Mucosa of descending colon (tissue), 3 donors: ENCODE measurements at regions of chr9 and their contacts with region 1.

Region 1: DNA sequence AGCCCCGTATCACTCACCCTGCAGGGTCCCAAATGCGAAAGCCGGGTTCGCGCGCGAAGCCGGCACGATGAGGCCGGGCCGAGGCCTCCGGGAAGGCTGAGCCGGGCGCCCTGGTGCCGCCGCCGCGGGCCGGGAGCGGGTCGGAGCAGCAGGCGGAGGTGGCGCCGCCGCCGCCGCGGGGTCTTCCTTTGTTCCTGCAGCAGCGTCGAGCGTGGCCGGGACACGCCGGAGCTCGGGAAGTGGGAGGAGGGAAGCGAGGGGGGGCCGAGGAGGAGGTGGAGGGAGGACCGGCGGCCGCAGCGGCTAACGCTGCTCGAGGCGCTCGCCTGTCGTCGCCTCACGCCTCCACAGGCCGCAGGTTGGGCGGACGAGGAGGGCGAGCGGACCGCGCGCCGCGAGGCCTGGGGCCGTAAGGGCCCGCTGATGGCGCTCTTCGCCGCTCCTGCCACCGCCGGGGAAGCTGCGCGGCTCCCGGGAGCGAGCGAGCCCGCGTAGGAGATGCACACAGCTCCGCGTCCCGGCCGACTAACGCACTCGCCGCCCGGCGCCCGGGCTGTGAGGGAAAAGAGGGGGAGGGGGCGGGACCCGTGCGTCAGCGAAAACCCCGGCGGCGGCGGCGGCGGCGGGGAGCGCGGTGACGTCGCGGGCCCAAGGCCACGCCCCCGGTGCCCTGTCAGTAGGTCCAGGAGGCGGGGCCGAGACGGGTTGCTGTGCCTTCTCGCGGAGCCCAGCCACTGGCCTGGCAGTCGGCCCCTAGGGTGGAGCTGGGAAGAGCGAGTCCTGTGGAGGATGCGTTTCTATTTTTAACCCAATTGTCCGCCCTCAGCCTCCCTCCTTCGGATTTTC is at the start of gene ZFAND5:
- DNase-seq: peak; percentile 98 to 99 (median 99)
- ATAC-seq: peak; percentile 92
- H3K4me3 ChIP-seq: peak within 1 kb of the TSS; percentile 79
- H3K4me1 ChIP-seq: peaks cover 22% of the 10 kb centered on the region
- CTCF ChIP-seq: peak; percentile 14
- total RNA-seq, gene ZFAND5: 147 to 181 (median 152) TPM

Region 2: DNA sequence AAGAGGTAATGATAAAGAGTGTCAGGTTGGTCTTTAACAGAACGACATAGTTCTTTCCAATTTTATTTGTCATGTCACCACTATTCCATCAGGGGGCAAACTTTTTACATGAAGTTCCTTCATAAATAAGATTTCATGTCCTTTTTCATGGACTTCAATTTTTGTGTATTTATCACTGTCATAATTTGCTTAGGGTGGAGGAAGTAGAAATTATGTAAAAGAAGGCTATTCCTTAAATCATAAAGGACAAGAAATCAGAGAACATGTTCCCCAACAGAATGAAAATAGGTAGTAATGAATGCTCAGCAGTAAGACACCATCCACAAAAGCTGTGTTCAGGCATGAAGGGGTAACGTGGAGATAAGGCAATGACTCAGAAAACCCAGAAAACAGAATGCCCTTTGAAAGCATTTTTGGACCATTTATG is 72.6 kb before region 1 on chr9:
- intact Hi-C with region 1: loop called in 1 of 2 experiments (anchors 5 kb)
- DNase-seq: no peak
- ATAC-seq: no peak
- H3K4me3 ChIP-seq: no peak overlapping the region
- H3K4me1 ChIP-seq: peaks cover 7% of the 10 kb centered on the region
- CTCF ChIP-seq: no peak

Region 3: GRCh38 chr9:72428329-72428728 is 63.4 kb after region 1 on chr9:
- intact Hi-C with region 1: no loop called
- DNase-seq: no peak
- ATAC-seq: no peak
- H3K4me3 ChIP-seq: no peak overlapping the region
- H3K4me1 ChIP-seq: no peaks in the 10 kb centered on the region
- CTCF ChIP-seq: no peak

Region 4: DNA sequence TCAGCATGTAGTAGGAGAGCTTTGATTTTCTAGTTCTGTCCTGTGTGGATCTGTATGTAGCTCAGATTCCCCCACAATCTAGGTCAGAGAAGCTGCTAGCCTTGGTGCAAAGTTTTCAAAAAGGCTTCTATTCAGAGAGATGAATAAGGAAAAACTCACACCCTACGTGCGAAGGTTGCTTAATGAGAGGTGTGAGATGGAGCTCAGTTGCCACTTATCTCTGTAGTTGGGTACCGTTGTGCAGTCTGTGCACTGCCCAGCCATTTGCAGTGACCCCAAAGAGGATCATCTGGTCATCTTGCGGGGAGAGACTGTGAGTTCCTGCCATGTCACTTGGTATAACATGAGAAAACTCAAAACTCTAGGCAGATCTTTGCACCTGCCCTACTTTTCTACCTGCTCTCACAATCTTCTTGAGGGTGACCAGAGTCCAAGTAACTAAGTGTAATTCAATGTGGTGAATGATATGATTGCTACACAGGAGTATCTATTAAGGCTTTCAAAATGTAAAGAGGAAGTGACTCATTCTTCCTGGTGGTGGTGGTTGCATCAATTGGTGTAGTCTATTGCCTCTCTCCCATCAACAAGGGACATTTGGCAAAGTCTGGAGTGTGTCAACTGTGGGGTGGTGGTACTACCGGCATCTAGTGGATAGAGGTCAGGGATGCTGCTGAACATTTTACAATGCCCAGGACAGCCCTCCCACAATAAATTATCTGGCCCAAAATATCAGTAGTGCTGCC is 221.7 kb after region 1 on chr9:
- intact Hi-C with region 1: loop called (anchors 10 kb)
- DNase-seq: peak in 1 of 3 donors; percentile 36
- ATAC-seq: peak; percentile 87
- H3K4me3 ChIP-seq: no peak overlapping the region
- H3K4me1 ChIP-seq: peaks cover 38% of the 10 kb centered on the region
- CTCF ChIP-seq: no peak

Region 5: GRCh38 chr9:72592502-72593403 is 227.9 kb after region 1 on chr9:
- intact Hi-C with region 1: loop called (anchors 10 kb)
- DNase-seq: peak in 1 of 3 donors; percentile 40
- ATAC-seq: peak; percentile 78
- H3K4me3 ChIP-seq: no peak overlapping the region
- H3K4me1 ChIP-seq: peaks cover 29% of the 10 kb centered on the region
- CTCF ChIP-seq: peak; percentile 63